Aorta (tissue), 5 donors: ENCODE measurements at regions of chr9 and their contacts with region 1.

Region 1: DNA sequence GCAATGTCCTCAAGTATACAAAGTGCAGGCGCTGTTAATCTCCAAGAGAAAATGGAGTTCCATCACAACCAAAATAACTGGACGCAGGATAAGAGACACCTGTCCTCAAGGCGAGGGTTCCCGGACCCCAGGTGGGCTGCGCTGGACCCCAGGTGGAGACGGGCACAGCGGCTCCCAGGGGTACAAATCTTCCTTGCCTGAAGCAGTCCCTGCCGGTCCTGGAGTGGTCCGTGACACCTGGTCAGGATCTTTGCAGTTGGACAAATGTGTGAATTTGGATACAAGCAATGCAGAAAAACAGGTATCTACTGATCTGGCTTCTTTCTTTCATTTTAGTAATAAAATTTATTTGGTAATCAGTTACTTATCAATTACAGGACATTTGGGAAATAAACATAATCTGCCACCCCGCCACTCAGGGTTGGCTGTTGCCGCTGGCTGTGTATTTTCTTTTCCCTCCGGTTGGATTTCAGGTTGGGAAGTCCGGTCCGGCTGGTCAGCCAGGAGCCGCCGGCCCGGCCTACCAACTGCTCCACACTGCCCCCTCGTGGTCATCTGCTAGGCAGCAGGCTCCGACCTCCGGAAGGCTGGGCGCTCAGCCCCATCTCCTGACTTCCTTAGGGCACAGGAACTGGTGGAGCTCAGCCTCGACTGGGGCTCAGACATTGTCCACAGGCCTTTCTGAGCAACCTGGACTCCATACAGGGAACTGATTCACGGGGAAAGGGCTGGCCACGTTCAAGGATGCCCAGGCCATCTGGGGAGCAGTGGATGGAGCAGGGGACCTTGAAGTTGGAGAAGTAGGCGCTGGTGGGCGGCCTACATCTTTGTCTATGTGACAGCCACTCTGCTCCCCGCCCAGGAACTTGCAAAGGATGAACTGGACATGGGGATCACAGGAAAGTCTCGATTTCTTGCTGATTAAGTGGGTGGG is 43.4 kb downstream of the NXNL2 start:
- DNase-seq: peak; percentile 88 to 96
- ATAC-seq: peak; percentile 93
- H3K4me3 ChIP-seq: no peak overlapping the region
- H3K27ac ChIP-seq: no peak overlapping the region
- H3K4me1 ChIP-seq: no peaks in the 10 kb centered on the region
- H3K27me3 ChIP-seq: no peaks in the 10 kb centered on the region

Region 2: GRCh38 chr9:88106491-88106890 is 471.9 kb before region 1 on chr9:
- intact Hi-C with region 1: loop called in 1 of 2 experiments (anchors 10 kb)
- DNase-seq: no peak
- ATAC-seq: no peak
- H3K4me3 ChIP-seq: no peak overlapping the region
- H3K27ac ChIP-seq: no peak overlapping the region
- H3K4me1 ChIP-seq: no peaks in the 10 kb centered on the region
- H3K27me3 ChIP-seq: no peaks in the 10 kb centered on the region

Region 3: DNA sequence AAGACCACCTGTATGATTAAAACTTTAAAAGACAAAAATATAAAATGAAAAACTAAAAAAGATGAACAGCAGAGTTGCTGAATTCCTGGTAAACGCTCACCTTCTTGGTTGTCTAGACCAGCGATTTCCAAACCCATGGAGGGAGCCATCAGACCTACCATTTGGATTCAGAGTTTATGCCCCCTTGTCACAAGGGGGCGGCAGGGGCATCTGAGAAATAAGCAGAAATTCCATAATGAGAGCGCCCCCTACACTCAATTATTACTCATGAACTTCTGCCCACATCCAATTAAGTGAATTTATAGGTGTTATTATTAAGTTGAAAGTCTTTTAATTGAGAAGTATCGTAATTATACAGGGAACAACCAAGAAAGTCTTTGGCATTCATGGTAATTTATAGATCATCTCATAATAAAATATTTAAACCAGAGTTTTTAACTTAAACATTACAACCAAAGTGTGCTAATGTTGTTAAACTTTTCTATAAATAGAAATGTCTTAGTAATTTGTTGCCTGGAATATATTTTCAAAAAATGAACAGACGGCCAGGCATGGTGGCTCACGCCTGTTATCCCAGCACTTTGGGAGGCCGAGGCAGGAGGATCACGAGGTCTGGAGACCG is 404.9 kb before region 1 on chr9:
- intact Hi-C with region 1: loop called (anchors 5 to 10 kb)
- DNase-seq: peak in 1 of 2 donors; percentile 64
- ATAC-seq: no peak
- H3K4me3 ChIP-seq: no peak overlapping the region
- H3K27ac ChIP-seq: no peak overlapping the region
- H3K4me1 ChIP-seq: no peaks in the 10 kb centered on the region
- H3K27me3 ChIP-seq: no peaks in the 10 kb centered on the region

Region 4: GRCh38 chr9:88460587-88461332 is 117.6 kb before region 1 on chr9:
- intact Hi-C with region 1: loop called in 1 of 2 experiments (anchors 10 kb)
- DNase-seq: no peak
- ATAC-seq: no peak
- H3K4me3 ChIP-seq: no peak overlapping the region
- H3K27ac ChIP-seq: no peak overlapping the region
- H3K4me1 ChIP-seq: peaks cover 2 to 4% of the 10 kb centered on the region in 2 donors
- H3K27me3 ChIP-seq: no peaks in the 10 kb centered on the region

Region 5: DNA sequence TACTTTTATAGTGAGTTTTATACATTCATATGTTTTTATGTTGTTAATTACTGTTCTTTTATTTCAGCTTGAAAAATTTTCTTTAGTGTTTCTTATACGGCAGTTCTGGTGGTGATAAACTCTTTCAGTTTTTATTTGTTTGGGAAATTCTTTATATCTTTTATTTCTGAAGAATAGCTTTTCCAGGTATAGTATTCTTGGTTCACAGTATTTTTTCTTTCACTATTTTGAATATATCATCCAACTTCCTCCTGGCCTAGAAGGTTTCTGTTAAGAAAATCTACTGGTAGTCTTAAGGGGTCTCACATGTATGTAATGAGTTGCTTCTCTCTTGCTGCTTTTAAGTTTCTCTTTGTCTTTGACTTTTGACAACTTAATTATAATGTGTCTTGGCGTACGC is 36.0 kb after region 1 on chr9:
- intact Hi-C with region 1: no loop called
- DNase-seq: no peak
- ATAC-seq: no peak
- H3K4me3 ChIP-seq: no peak overlapping the region
- H3K27ac ChIP-seq: no peak overlapping the region
- H3K4me1 ChIP-seq: no peaks in the 10 kb centered on the region
- H3K27me3 ChIP-seq: no peaks in the 10 kb centered on the region